Prostate gland (tissue), 2 donors: ENCODE measurements at regions of chr19 and their contacts with region 1.

Region 1: GRCh38 chr19:13051267-13052165 is 51.1 kb downstream of the LYL1 start:
- DNase-seq: peak; percentile 75
- H3K4me3 ChIP-seq: peak overlapping the region in 1 of 2 donors; percentile 9
- H3K27ac ChIP-seq: peak overlapping the region; percentile 95 to 96
- H3K4me1 ChIP-seq: peaks cover 69% of the 10 kb centered on the region
- H3K27me3 ChIP-seq: no peaks in the 10 kb centered on the region
- CTCF ChIP-seq: peak in 1 of 4 experiments; percentile 12
- POLR2A ChIP-seq: peak; percentile 17

Region 2: DNA sequence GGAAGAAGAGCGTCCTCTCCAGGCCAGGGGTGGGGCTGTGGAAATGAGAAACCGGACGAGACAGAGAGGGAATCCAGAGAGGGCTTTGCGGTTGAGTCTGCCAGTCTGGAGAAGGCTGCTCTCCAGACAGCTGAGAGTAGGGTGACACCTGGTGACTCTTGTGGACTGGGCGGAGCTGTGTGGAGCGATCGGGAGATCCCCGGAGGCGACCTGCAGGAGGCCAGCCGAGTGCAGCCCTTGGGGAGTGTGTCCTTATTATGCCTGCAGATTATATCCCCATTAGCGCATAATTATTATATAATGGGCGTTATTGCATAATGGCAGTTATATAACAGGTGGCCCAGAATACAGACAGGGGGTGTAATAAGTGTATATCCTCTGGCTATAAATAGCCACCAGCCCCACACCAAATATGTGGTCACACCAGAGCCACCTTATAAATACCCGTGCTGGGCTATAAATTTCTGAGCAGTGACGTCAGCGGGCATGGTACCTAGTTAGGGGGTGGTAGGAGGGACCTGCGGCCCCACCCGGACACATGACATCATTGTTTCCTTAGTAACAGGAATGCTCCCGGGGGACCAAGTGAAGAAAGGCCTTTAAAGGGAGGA is 15.0 kb before region 1 on chr19:
- intact Hi-C with region 1: loop called (anchors 2 kb)
- DNase-seq: no peak
- H3K4me3 ChIP-seq: no peak overlapping the region
- H3K27ac ChIP-seq: peak overlapping the region; percentile 96 to 97
- H3K4me1 ChIP-seq: peaks cover 83% of the 10 kb centered on the region
- H3K27me3 ChIP-seq: no peaks in the 10 kb centered on the region
- CTCF ChIP-seq: peak in 3 of 4 experiments; percentile 40 to 52 (median 47)
- POLR2A ChIP-seq: no peak

Region 3: DNA sequence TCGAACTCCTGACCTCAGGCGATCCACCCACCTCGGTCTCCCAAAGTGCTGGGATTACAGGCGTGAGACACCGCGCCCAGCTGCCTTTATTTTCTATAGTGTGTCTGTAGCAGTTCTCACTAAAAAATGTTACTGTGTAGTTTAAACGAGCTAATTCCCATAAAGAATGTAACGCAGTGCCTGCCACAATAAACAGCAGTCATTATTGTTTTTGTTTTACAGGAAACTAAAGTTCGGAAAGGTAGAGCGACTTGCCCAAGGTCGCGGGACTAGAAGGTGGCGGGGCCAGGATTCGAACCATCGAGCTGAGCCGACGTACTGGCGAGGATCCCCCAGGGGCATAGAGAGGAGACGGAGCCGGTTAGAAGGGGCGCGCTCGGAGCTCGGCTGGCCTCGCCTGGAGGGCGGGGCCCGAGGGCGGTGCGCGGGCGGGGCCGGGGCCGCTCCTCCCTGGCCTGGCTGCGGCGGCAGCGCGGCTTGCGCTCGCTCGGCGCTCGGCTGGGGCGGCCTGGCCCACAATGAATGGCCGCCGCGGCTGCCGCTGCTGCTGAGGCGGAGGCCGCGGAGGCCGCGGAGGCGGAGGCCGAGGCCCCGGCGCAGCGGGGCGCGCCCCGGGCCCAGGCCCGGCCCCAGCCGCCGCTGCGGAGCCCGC is 66.4 kb after region 1 on chr19 and contains the start of gene NACC1:
- intact Hi-C with region 1: no loop called
- DNase-seq: peak; percentile 85
- H3K4me3 ChIP-seq: peak within 1 kb of the TSS; percentile 90 to 94
- H3K27ac ChIP-seq: peak within 1 kb of the TSS; percentile 69 to 71
- H3K4me1 ChIP-seq: peaks cover 11% of the 10 kb centered on the region
- H3K27me3 ChIP-seq: no peaks in the 10 kb centered on the region
- CTCF ChIP-seq: peak in 1 of 4 experiments; percentile 7
- POLR2A ChIP-seq: no peak
- total RNA-seq, gene NACC1: 52.4 to 91.9 TPM